Mammary epithelial cell (primary cell): ENCODE measurements at regions of chr1 and their contacts with region 1.

Region 1: DNA sequence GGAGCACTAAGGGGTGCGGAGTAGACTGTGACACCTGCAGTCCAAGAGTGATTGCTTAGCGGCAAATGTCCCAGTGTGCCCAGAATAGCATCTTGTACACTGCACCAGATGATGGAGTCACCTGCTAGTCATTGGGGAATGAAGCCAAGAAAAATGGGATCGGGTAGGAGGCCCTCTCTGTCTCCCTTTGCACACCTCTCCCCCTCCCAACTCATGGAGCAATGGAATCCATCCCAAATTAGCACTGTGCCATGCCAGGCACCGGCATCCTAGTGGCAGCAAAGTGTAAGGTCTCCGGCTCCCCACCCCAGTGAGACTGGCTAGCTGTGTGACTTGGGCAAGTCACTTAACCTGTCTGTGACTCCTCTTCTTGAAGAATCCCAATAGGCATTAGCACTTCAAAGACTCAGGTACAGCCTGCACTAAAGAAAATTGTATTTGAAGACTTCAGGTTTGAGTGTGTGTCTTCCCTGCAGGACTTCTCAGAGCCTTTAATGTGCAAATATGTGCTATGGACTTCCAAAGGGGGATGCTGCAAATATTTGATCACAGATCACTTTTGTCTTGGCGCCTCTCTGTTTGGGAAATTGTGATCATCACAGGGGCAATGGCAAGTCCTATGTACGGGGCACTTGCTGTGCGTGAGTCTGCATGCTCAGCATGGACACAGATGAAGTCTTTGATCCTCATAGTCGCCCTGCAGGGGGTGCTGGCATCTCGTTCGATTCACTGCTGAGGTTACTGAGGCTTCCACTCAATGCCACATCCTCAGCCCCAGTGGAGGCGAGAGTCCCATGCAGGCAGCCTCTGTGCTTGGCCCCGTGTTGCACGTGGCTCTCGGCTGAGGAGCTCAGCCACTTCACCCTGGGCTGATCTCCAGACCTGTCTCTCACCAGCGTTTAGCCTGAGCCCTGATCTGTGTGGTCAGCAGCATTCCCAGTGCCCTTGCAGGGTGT is 272.9 kb upstream of the C1orf174 start:
- DNase-seq: no peak
- H3K4me3 ChIP-seq: no peak overlapping the region
- H3K27ac ChIP-seq: no peak overlapping the region
- H3K4me1 ChIP-seq: no peaks in the 10 kb centered on the region
- H3K27me3 ChIP-seq: no peaks in the 10 kb centered on the region
- CTCF ChIP-seq: no peak

Region 2: DNA sequence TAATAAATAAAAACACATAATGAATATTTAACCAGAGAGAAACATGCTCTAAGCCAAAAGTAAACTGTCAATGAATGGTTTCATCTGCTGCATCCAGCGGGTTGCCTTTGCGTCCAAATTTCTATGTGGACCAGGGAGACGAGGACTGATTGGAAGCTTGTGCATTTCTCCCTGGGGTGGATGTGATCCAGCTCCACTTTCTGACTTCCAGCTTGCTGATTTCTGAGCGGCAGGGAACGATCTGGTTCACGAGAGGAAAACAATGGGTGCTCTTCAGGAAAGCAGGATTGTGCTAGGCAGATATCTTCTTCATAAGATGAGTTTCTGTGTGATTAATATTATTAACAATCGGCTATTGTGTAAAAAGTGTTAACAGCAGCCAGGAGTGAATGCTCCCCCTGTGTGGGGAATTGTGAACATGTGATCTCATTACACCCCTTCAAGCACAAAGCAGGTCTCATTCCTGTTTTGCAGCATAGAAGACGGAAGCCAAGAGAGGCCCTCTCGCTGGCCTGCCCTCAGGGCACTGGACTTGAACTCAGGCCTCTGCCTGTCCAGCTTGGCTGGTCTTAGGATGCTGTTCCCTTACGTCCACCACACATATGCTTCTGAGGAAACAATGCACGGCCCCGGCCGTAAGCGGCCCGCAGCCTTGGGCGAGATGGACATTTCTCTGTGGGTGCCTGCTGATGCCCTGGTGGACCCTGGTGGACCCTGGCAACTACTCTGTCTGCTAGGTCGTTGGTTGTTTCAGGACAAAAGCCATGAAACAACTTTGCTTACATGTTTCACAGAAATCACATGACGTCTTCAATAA is 89.5 kb before region 1 on chr1:
- CTCF ChIA-PET with region 1: no interaction called
- dilution Hi-C with region 1: loop called (anchors 5 kb)
- in situ Hi-C with region 1: no loop called
- intact Hi-C with region 1: no loop called
- DNase-seq: no peak
- H3K4me3 ChIP-seq: no peak overlapping the region
- H3K27ac ChIP-seq: no peak overlapping the region
- H3K4me1 ChIP-seq: no peaks in the 10 kb centered on the region
- H3K27me3 ChIP-seq: no peaks in the 10 kb centered on the region
- CTCF ChIP-seq: no peak